Activated CD4-positive, alpha-beta T cell treated with anti-CD3 and anti-CD28 coated beads for 36 hours (primary cell): ENCODE measurements at regions of chr18 and their contacts with region 1.

Region 1: DNA sequence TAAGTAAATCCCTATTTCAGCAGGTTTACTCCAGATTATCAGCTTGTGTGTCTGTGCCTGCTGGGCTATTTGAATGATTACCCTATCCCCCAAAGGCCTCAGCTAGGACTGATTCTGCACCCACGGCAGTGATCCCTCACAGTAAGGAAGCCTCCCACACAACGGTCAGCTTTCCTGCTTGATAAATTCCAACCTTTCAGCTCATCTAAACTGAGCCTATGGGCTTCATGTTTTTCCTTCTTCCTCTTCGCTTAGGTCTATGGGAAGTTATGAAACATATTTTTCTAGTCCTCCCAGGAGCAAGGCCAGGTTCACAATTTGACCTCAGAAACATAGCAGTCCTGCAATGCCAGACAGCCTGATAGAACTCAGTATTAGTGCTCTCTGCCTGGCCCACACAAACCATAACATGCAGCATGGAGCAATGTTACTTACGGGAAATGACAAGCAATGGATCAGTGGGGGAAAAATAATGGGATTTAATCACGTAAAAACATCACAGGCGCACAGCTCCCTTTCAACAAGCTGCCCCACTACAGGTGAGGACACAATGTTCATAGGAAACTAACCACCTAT is 170.9 kb downstream of the ZNF521 start:
- DNase-seq: no peak
- ATAC-seq: no peak
- H3K4me3 Mint-ChIP-seq: no peak overlapping the region
- H3K27ac Mint-ChIP-seq: no peak overlapping the region
- H3K4me1 Mint-ChIP-seq: no peaks in the 10 kb centered on the region
- H3K27me3 Mint-ChIP-seq: peaks cover 6% of the 10 kb centered on the region

Region 2: DNA sequence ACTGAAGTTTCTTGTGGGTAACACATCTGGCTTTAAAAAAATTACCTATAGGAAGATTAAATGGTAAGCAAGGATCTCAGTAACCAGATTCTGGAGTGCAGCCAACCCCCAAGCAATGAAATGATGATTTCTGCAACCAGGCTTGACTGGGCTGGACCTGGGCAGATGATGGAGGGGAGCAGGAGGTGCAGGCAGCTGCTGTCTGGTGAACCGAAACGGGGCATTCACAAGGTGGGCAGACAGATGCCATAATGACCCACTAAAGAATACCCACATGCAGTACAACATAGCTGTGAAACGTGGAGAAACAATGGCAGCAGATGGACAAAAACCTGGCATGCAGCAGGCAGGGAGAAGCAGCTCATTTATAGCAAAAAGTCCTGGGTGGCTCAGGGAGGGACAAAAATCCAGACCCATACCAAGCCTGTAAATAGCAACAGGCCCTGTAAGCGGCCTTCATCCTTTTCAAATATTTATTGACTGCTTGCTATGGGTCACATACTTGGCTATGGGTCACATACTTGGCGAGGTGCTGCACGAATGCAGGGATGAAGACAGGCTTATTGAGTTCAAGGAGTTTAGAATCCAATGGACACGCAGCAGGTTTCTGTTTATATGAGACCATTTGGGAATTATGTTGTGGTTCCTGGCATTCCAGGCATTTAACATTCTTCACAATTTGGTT is 476.0 kb before region 1 on chr18:
- CTCF ChIA-PET with region 1: no interaction called
- POLR2A ChIA-PET with region 1: no interaction called
- intact Hi-C with region 1: no loop called
- DNase-seq: no peak
- ATAC-seq: no peak
- H3K4me3 Mint-ChIP-seq: no peak overlapping the region
- H3K27ac Mint-ChIP-seq: no peak overlapping the region
- H3K4me1 Mint-ChIP-seq: no peaks in the 10 kb centered on the region
- H3K27me3 Mint-ChIP-seq: peaks cover 13% of the 10 kb centered on the region

Region 3: GRCh38 chr18:24763765-24764513 is 417.1 kb before region 1 on chr18:
- CTCF ChIA-PET with region 1: no interaction called
- POLR2A ChIA-PET with region 1: no interaction called
- intact Hi-C with region 1: no loop called
- DNase-seq: no peak
- ATAC-seq: no peak
- H3K4me3 Mint-ChIP-seq: no peak overlapping the region
- H3K27ac Mint-ChIP-seq: no peak overlapping the region
- H3K4me1 Mint-ChIP-seq: no peaks in the 10 kb centered on the region
- H3K27me3 Mint-ChIP-seq: peaks cover 14% of the 10 kb centered on the region

Region 4: DNA sequence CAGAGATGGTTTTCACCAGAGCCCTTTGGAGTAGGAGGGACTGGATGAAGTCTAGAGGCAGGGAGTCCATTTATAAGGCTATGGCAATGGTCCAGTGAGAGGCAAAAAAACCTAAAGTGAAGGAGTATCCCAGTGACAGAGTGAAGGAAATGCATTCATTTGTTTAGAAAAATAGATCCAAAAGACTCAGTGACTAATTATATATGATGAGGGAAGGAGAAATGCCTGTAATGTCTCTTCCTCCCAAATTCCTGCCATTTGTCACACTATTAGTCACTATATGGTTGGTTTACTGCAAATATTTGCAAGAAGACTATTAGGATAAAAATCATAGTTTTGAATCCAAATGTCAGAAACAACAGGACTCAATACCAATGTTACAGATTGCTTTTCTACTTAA is 66.7 kb after region 1 on chr18:
- CTCF ChIA-PET with region 1: no interaction called
- POLR2A ChIA-PET with region 1: no interaction called
- intact Hi-C with region 1: loop called in 1 of 2 experiments (anchors 5 kb)
- DNase-seq: no peak
- ATAC-seq: no peak
- H3K4me3 Mint-ChIP-seq: no peak overlapping the region
- H3K27ac Mint-ChIP-seq: no peak overlapping the region
- H3K4me1 Mint-ChIP-seq: no peaks in the 10 kb centered on the region
- H3K27me3 Mint-ChIP-seq: no peaks in the 10 kb centered on the region

Region 5: GRCh38 chr18:25365242-25365641 is 184.2 kb after region 1 on chr18:
- CTCF ChIA-PET with region 1: no interaction called
- POLR2A ChIA-PET with region 1: no interaction called
- intact Hi-C with region 1: no loop called
- DNase-seq: no peak
- ATAC-seq: no peak
- H3K4me3 Mint-ChIP-seq: no peak overlapping the region
- H3K27ac Mint-ChIP-seq: no peak overlapping the region
- H3K4me1 Mint-ChIP-seq: no peaks in the 10 kb centered on the region
- H3K27me3 Mint-ChIP-seq: peaks cover 18% of the 10 kb centered on the region